ENCODE measurements at regions of chr16 and their contacts with region 1.

Region 1: GRCh38 chr16:70653809-70654771 is 7.7 kb downstream of the IL34 start:
- DNase-seq: peak; percentile 57 to 86 (median 77)
- ATAC-seq: peak; percentile 89
- H3K4me3 ChIP-seq: no peak overlapping the region
- H3K4me3 Mint-ChIP-seq: peak overlapping the region; percentile 3 to 76 (median 51)
- H3K27ac ChIP-seq: no peak overlapping the region
- H3K27ac Mint-ChIP-seq: peak overlapping the region in 4 of 9 donors; percentile 3 to 60 (median 51)
- H3K4me1 ChIP-seq: peaks cover 0 to 3% of the 10 kb centered on the region in 2 donors
- H3K4me1 Mint-ChIP-seq: peaks cover 4 to 6% (median 5%) of the 10 kb centered on the region in 7 donors
- H3K27me3 ChIP-seq: no peaks in the 10 kb centered on the region
- H3K27me3 Mint-ChIP-seq: peaks cover 0 to 3% (median 0%) of the 10 kb centered on the region in 5 donors

Region 2: GRCh38 chr16:70331588-70332358 is 322.3 kb before region 1 on chr16:
- CTCF ChIA-PET with region 1: interaction called, 4 read pairs
- POLR2A ChIA-PET with region 1: no interaction called
- intact Hi-C with region 1: loop called in 1 of 2 experiments (anchors 1 kb)
- DNase-seq: peak in 5 of 9 donors; percentile 5 to 24 (median 16)
- ATAC-seq: peak; percentile 63
- H3K4me3 ChIP-seq: no peak overlapping the region
- H3K4me3 Mint-ChIP-seq: no peak overlapping the region
- H3K27ac ChIP-seq: no peak overlapping the region
- H3K27ac Mint-ChIP-seq: peak overlapping the region in 4 of 9 donors; percentile 52 to 72 (median 56)
- H3K4me1 ChIP-seq: no peaks in the 10 kb centered on the region
- H3K4me1 Mint-ChIP-seq: no peaks in the 10 kb centered on the region
- H3K27me3 ChIP-seq: no peaks in the 10 kb centered on the region
- H3K27me3 Mint-ChIP-seq: no peaks in the 10 kb centered on the region

Region 3: GRCh38 chr16:70508752-70509151 is 145.3 kb before region 1 on chr16:
- CTCF ChIA-PET with region 1: no interaction called
- POLR2A ChIA-PET with region 1: no interaction called
- intact Hi-C with region 1: loop called (anchors 2 to 5 kb)
- DNase-seq: peak in 2 of 9 donors; percentile 5 to 16
- ATAC-seq: peak; percentile 63
- H3K4me3 ChIP-seq: no peak overlapping the region
- H3K4me3 Mint-ChIP-seq: no peak overlapping the region
- H3K27ac ChIP-seq: no peak overlapping the region
- H3K27ac Mint-ChIP-seq: peak overlapping the region in 8 of 9 donors; percentile 35 to 87 (median 70)
- H3K4me1 ChIP-seq: no peaks in the 10 kb centered on the region
- H3K4me1 Mint-ChIP-seq: peaks cover 6 to 13% (median 9%) of the 10 kb centered on the region in 7 donors
- H3K27me3 ChIP-seq: no peaks in the 10 kb centered on the region
- H3K27me3 Mint-ChIP-seq: no peaks in the 10 kb centered on the region

Region 4: DNA sequence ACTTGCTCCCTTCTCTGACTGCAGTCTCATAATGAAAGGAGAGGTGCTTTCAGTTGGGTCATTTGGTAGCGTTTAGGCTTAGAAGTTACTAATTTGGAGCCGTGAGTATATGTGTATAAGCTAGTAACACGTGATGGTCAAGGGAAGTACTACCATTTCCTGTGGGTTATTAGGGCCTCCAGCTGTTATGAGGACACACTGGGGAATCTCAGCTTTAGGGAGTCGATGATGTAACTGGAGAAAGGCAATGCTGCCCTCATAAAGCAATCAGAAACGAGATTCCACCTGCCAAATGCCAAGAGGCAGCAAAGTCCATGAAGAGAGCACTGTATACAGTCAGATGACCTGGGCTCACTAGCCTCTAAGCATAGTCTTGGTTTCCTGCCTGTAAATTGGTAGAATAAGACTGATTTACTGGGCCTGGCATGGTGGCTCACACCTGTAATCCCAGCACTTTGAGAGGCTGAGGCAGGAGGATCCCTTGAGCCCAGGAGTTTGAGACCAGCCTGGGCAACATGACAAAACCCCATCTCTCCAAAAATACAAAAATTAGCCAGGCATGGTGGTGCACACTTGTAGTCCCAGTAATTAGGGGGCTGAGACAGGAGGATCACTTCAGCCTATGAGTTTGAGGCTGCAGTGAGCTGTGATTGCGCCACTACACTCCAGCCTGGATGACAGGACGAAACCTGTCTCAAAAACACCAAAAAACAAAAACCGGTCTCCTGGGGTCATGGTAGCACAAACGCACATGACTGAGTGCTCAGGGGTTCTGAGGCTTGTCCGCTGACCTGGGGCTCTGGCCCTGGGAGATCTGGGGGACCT is 77.4 kb before region 1 on chr16:
- CTCF ChIA-PET with region 1: no interaction called
- POLR2A ChIA-PET with region 1: no interaction called
- intact Hi-C with region 1: loop called in 1 of 2 experiments (anchors 5 kb)
- DNase-seq: no peak
- ATAC-seq: peak; percentile 61
- H3K4me3 ChIP-seq: no peak overlapping the region
- H3K4me3 Mint-ChIP-seq: no peak overlapping the region
- H3K27ac ChIP-seq: no peak overlapping the region
- H3K27ac Mint-ChIP-seq: peak overlapping the region in 6 of 9 donors; percentile 15 to 81 (median 62)
- H3K4me1 ChIP-seq: no peaks in the 10 kb centered on the region
- H3K4me1 Mint-ChIP-seq: peaks cover 0 to 11% (median 0%) of the 10 kb centered on the region in 7 donors
- H3K27me3 ChIP-seq: no peaks in the 10 kb centered on the region
- H3K27me3 Mint-ChIP-seq: no peaks in the 10 kb centered on the region

Measured in naive thymus-derived CD4-positive, alpha-beta T cell (primary cell).